ENCODE measurements at regions of chr12 and their contacts with region 1.

Region 1: GRCh38 chr12:77488041-77488620 is 342.6 kb upstream of the NAV3 start:
- DNase-seq: no peak

Region 2: GRCh38 chr12:78035901-78036606 is 547.9 kb after region 1 on chr12:
- in situ Hi-C with region 1: loop called (anchors 10 kb)
- DNase-seq: no peak

Measured in Caki2 (cell line).